ENCODE measurements at regions of chr11 and their contacts with region 1.

Region 1: DNA sequence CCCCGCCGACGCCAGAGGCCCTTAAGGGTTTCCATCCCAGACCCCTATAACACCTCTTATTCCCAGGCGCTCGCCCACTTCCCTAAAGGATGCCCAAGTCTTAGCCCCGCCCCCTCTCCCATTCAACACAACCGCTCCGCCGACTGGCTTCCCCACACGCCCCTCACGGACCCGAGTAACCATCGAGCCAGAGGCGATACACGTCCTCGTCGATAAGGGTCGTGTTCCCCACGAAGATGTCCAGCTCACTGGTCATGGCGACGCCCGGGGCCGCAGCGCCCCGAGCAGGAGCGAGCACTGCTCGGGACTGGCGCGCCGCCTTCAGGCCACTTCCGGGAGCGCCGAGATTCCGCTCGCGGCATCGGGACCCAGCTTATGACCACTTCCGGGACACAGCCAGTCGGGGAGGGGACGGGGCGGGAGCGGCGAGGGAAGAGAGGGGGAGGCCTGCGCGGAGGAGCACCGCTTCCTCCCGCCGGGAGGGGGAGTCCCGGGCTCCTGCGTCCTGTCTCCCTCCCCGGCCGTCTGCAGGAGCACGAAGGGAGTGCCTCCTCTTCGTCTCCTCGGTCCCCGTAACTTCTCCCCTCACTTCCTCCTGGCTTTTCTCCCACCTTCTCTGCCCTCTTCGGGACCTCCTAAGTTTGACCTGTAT is at the start of gene FIBP:
- DNase-seq: peak; percentile 98
- H3K4me3 Mint-ChIP-seq: peak within 1 kb of the TSS; percentile 95
- H3K27ac Mint-ChIP-seq: peak within 1 kb of the TSS; percentile 98
- H3K4me1 Mint-ChIP-seq: peaks cover 51% of the 10 kb centered on the region
- H3K27me3 Mint-ChIP-seq: no peaks in the 10 kb centered on the region
- total RNA-seq, gene FIBP: 91.0 and 95.7 TPM in 2 replicates

Region 2: DNA sequence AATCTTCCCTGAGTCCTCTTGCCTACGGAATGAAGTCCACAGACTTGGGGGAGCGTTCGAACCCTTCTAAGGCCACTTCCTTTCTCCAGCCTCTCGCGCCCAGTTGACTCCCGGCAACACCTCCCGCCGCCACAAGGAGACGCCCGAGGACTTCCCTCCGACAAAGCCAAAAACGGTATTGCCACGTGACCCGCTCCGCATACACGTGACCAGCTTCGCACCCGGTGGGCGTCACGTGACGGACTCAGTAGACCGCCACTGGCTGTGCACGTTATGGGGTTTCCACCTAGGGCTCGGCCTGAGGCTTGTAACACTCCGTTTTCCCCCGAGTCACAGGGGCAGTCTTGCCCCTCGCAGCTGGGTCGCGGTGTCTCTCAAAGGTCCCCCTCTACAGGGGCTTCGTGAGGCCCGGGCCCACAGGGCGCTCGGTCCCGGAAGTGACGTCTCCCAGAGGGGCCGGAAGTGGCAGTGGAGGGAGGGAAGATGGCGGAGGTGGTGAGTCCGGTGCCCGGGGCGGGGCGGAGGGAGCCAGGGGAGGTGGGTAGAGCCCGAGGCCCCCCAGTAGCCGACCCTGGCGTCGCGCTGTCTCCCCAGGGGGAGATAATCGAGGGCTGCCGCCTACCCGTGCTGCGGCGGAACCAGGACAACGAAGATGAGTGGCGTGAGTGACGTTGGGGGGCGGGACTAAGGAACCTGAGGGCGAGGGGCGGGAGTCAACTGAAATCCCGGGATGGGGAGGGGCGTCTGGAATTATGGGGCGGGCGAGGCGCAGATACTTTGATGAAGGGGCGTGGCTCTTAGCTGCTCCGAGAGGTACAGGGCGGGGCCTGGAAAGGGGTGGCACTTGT is 176.3 kb before region 1 on chr11 and contains the start of gene KAT5:
- intact Hi-C with region 1: loop called (anchors 5 kb)
- DNase-seq: peak; percentile 99
- H3K4me3 Mint-ChIP-seq: peak within 1 kb of the TSS; percentile 93
- H3K27ac Mint-ChIP-seq: peak within 1 kb of the TSS; percentile 99
- H3K4me1 Mint-ChIP-seq: peaks cover 22% of the 10 kb centered on the region
- H3K27me3 Mint-ChIP-seq: no peaks in the 10 kb centered on the region
- total RNA-seq, gene KAT5: 71.6 and 72.3 TPM in 2 replicates

Region 3: GRCh38 chr11:65817835-65818742 is 70.2 kb before region 1 on chr11:
- intact Hi-C with region 1: no loop called
- DNase-seq: peak; percentile 98
- H3K4me3 Mint-ChIP-seq: peak overlapping the region; percentile 83
- H3K27ac Mint-ChIP-seq: peak overlapping the region; percentile 87
- H3K4me1 Mint-ChIP-seq: peaks cover 17% of the 10 kb centered on the region
- H3K27me3 Mint-ChIP-seq: peaks cover 2% of the 10 kb centered on the region

Region 4: GRCh38 chr11:65844231-65845190 is 43.8 kb before region 1 on chr11:
- intact Hi-C with region 1: no loop called
- DNase-seq: no peak
- H3K4me3 Mint-ChIP-seq: no peak overlapping the region
- H3K27ac Mint-ChIP-seq: no peak overlapping the region
- H3K4me1 Mint-ChIP-seq: no peaks in the 10 kb centered on the region
- H3K27me3 Mint-ChIP-seq: no peaks in the 10 kb centered on the region

Region 5: DNA sequence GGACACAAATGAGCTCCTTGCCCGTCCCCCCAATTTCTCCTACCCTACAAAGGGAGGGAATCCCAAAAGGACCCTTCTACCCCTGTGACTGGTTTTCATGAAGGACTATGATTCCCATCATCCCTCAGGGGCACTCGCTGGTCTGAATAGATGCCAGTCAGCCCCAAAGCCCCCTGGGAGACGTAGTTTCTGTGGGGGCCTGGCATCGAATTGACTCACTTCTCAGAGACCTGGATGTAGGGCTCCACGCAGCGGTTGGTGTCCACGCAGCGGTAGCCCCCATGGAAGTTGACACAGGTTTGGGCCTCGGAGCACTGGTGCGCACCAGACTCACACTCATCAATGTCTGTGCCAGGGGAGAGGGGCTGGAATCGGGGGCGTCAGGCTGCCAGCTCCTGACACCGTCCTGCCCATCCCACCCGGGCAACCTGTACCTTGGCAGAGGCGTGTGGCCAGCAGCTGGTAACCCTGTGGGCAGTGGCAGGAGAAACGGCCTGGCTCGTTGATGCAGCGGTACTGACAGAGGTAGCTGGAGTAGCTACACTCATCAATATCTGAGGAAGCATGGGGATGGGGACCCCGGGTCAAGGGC is 20.1 kb before region 1 on chr11:
- intact Hi-C with region 1: no loop called
- DNase-seq: no peak
- H3K4me3 Mint-ChIP-seq: no peak overlapping the region
- H3K27ac Mint-ChIP-seq: no peak overlapping the region
- H3K4me1 Mint-ChIP-seq: peaks cover 16% of the 10 kb centered on the region
- H3K27me3 Mint-ChIP-seq: no peaks in the 10 kb centered on the region

Region 6: GRCh38 chr11:65900125-65900898 is 12.0 kb after region 1 on chr11 and contains the start of gene FOSL1:
- intact Hi-C with region 1: loop called (anchors 1 kb)
- DNase-seq: peak; percentile 97
- H3K4me3 Mint-ChIP-seq: peak within 1 kb of the TSS; percentile 82
- H3K27ac Mint-ChIP-seq: peak within 1 kb of the TSS; percentile 78
- H3K4me1 Mint-ChIP-seq: peaks cover 37% of the 10 kb centered on the region
- H3K27me3 Mint-ChIP-seq: peaks cover 10% of the 10 kb centered on the region
- total RNA-seq, gene FOSL1: 32.1 and 32.9 TPM in 2 replicates

Region 7: DNA sequence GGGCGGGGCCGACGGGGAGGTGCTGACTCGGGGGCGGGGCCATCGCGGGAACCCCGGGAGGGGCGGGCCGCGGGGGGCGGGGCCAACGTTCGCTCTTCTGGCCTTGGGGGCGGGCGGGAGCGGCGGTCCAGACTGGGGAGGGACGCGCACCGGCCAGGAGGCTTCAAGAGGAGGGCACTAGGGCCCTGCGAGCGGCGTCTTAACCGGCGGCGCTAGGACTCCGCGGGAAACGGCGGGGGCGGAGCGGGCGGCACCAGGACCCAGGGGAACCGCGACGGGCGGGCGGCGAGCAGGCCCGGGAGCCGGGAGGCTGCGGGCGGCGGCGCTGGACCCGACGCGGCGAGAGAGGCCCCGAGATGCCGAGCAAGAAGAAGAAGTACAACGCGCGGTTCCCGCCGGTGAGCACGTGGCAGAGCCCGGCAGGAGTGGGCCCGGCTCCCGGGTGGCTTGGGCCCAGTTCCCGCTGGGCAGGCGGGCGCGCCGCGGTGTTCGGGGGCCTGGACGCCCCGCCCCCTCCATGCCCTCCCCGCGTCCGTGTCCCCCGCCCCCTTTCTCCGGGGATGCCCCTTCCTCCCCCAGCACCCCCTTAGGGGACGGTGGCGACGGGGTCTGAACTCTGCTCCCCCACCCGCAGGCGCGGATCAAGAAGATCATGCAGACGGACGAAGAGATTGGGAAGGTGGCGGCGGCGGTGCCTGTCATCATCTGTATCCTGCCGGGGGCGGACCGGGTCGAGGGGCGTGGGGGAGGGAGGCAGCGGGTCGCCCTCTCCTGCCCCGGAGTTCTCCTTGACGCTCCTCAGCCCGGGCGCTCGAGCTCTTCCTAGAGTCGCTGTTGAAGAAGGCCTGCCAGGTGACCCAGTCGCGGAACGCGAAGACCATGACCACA is 31.1 kb after region 1 on chr11 and contains the start of gene DRAP1:
- intact Hi-C with region 1: loop called (anchors 1 kb)
- DNase-seq: peak; percentile 99
- H3K4me3 Mint-ChIP-seq: peak within 1 kb of the TSS; percentile 96
- H3K27ac Mint-ChIP-seq: peak within 1 kb of the TSS; percentile 90
- H3K4me1 Mint-ChIP-seq: peaks cover 25% of the 10 kb centered on the region
- H3K27me3 Mint-ChIP-seq: no peaks in the 10 kb centered on the region
- total RNA-seq, gene DRAP1: 113 and 117 TPM in 2 replicates

Region 8: GRCh38 chr11:65927904-65928397 is 39.7 kb after region 1 on chr11:
- intact Hi-C with region 1: loop called (anchors 1 kb)
- DNase-seq: peak; percentile 94
- H3K4me3 Mint-ChIP-seq: peak overlapping the region; percentile 81
- H3K27ac Mint-ChIP-seq: peak overlapping the region; percentile 97
- H3K4me1 Mint-ChIP-seq: peaks cover 42% of the 10 kb centered on the region
- H3K27me3 Mint-ChIP-seq: no peaks in the 10 kb centered on the region

Region 9: DNA sequence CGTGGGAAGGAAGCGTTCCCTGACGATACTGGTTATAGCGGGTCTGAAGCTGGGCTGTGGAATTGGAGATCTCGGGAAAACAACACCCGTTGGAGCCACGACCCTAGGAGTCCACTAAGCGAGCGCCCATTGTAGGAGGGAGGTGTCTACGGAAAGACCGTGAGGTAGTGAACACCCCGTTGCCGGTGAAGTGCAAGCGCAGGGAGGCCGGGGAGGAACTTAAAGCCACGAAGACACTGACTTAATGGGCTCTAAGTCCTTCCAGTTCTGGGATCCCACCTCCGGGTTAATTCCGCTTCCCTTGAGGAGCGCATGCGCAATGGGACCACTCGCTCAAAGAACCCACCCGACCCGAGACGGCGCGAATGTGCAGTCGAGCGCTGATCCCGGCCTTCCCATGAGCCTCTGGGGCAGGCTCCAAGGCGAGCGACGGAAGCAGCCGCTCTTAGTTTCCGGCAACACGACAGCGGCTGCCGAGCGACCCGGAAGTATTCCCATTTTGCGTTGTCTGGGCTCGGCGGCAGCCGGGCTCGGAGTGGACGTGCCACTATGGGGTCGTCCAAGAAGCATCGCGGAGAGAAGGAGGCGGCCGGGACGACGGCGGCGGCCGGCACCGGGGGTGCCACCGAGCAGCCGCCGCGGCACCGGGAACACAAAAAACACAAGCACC is 73.1 kb after region 1 on chr11 and contains the start of gene SART1:
- intact Hi-C with region 1: loop called (anchors 2 kb)
- DNase-seq: peak; percentile 99
- H3K4me3 Mint-ChIP-seq: peak within 1 kb of the TSS; percentile 90
- H3K27ac Mint-ChIP-seq: peak within 1 kb of the TSS; percentile 95
- H3K4me1 Mint-ChIP-seq: peaks cover 42% of the 10 kb centered on the region
- H3K27me3 Mint-ChIP-seq: peaks cover 1% of the 10 kb centered on the region
- total RNA-seq, gene SART1: 99.1 and 104 TPM in 2 replicates

Region 10: DNA sequence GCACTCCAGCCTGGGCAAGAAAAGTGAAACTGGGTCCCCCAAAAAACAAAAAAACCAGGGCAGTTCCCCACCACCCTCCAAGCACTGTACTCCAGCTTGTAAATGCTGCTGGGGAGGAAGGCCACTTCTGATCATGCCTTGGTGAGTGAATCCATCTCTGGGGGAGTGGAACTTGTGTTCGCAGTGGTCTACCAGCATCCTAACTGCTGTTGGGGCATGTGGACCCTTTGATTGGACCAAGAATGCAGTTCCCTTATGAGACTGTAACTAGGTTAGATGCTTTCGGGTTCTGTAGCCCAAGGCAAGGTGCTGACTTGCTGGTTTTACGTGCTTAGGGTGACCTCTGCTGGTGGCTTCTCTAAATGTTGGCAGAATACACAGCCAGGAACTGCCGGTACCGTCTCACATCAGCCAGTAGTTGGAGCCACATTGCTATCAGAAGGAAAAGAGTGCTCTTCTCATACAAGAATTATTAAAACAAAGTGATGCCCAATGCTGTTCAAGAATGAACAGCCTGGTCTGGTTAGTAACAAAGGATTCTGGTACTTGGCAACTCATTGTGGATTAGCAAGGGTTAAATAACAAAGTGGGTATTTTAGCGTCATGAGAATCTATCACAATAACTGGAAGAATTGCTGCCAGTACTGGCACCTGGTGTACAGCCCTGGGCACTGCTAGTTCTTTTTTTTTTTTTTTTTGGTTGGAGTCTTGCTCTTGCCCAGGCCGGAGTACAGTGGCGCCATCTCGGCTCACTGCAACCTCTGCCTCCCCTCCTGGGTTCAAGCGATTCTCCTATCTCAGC is 100.7 kb after region 1 on chr11:
- intact Hi-C with region 1: loop called (anchors 1 kb)
- DNase-seq: peak; percentile 98
- H3K4me3 Mint-ChIP-seq: no peak overlapping the region
- H3K27ac Mint-ChIP-seq: peak overlapping the region; percentile 80
- H3K4me1 Mint-ChIP-seq: peaks cover 6% of the 10 kb centered on the region
- H3K27me3 Mint-ChIP-seq: no peaks in the 10 kb centered on the region

Measured in activated CD4-positive, alpha-beta T cell treated with anti-CD3 and anti-CD28 coated beads, Interleukin-2, amount 10 ng/mL, durations not matched to agents 24 days and 14 days (primary cell).